H1 (cell line): ENCODE measurements at regions of chr14 and their contacts with region 1.

Region 1: DNA sequence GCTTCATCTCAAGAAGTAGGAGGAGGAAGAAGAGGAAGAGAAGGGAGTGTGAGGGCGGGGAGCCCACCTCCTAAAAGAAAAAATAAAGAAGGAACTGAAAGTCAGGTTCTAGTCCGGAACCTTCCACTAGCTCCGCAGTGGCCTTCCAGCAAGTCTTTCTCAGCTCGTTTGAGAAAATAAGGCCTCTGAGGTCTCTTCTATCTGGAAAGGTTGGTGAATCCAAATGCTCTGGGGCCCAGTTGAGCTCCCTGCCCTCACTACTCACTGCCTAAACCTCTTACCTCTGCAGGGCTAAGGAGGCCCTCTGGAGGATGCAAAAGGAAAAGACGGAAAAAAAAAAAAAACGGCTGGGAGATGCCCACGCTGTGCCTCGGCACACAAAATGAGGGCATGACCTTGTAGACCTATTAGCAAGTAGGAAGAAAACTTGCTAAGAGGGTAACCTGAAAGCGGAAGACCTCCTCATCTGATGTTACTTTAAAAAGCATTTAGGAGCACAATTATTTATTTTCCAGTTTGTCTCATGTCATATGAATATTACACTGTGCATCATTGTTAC is 35.9 kb downstream of the FBLN5 start:
- DNase-seq: peak in 1 of 2 experiments; percentile 46
- H3K4me3 ChIP-seq: no peak overlapping the region
- H3K27ac ChIP-seq: no peak overlapping the region
- H3K4me1 ChIP-seq: no peaks in the 10 kb centered on the region
- H3K27me3 ChIP-seq: no peaks in the 10 kb centered on the region
- CTCF ChIP-seq: peak; percentile 16 to 73 (median 51)
- EP300 ChIP-seq: no peak
- POLR2A ChIP-seq: no peak
- RAD21 ChIP-seq: peak; percentile 92 to 96

Region 2: DNA sequence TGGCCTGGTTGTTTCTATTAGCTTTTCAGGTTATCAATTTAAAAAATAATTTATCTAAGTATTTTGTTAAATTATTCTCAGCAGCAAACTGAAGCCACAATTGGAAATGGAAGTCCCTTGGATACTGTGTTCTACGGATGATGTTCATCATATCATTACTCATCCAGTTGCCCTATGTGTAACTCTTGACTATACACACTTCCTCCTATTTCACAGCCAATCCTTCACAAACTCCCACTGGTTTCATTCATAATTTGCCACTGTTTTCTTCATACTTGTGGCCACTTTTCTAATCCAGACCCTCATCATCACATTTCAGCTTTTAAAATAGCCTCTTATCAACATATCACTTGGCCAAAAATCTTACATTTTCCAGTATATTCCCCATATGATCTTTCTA is 263.7 kb before region 1 on chr14:
- CTCF ChIA-PET with region 1: interaction called, 14 read pairs
- POLR2A ChIA-PET with region 1: no interaction called
- DNase-seq: no peak
- H3K4me3 ChIP-seq: no peak overlapping the region
- H3K27ac ChIP-seq: no peak overlapping the region
- H3K4me1 ChIP-seq: no peaks in the 10 kb centered on the region
- H3K27me3 ChIP-seq: no peaks in the 10 kb centered on the region; a peak in 1 of 7 replicates
- CTCF ChIP-seq: no peak
- EP300 ChIP-seq: no peak
- POLR2A ChIP-seq: no peak
- RAD21 ChIP-seq: no peak

Region 3: DNA sequence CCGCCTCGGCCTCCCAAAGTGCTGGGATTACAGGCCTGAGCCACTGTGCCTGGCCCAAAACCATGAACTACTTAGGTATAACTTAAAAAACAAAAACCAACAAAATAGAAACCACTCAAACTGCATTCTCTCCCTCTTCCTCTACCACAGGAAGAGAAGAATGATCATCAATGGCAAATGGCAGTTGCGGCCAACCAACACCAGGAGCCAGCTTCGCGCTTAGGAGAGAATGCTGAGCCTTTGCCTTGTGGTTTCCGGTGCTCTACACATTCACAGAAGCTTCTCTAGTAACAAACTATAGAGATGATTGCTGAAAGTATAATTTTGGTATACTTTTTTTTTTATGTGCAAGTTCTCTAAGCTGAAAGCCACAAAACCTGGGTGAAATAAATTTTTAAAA is 196.7 kb before region 1 on chr14:
- CTCF ChIA-PET with region 1: interaction called, 15 read pairs
- POLR2A ChIA-PET with region 1: no interaction called
- DNase-seq: no peak
- H3K4me3 ChIP-seq: no peak overlapping the region
- H3K27ac ChIP-seq: no peak overlapping the region
- H3K4me1 ChIP-seq: no peaks in the 10 kb centered on the region
- H3K27me3 ChIP-seq: no peaks in the 10 kb centered on the region
- CTCF ChIP-seq: peak; percentile 55 to 68 (median 64)
- EP300 ChIP-seq: no peak
- POLR2A ChIP-seq: no peak
- RAD21 ChIP-seq: peak; percentile 81 to 86

Region 4: DNA sequence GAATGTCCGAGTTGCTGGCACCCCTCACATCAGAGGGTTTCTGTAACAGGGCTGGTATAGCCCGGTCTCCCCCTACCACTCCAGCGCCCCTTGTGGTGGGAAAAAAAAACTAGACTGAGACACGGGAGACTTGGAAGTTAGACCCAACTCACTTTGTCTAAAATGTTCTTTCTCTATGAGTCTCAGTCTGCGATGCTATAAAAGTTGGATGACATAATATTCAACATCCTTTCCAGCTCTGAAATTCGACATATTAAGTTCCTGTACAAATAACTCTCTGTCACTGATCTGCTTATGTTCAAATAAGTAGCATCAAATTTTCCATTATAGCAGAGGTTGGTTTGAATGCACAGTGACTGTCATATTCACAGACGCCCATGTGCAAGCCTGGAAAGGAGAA is 18.5 kb before region 1 on chr14:
- CTCF ChIA-PET with region 1: interaction called, 15 read pairs
- POLR2A ChIA-PET with region 1: no interaction called
- DNase-seq: peak in 1 of 2 experiments; percentile 82
- H3K4me3 ChIP-seq: no peak overlapping the region
- H3K27ac ChIP-seq: no peak overlapping the region
- H3K4me1 ChIP-seq: peaks cover 0 to 4% (median 1%) of the 10 kb centered on the region in 4 experiments; a peak in 3 of 7 replicates
- H3K27me3 ChIP-seq: no peaks in the 10 kb centered on the region
- CTCF ChIP-seq: peak; percentile 74 to 82 (median 76)
- EP300 ChIP-seq: no peak
- POLR2A ChIP-seq: no peak
- RAD21 ChIP-seq: peak; percentile 68 to 73

Region 5: DNA sequence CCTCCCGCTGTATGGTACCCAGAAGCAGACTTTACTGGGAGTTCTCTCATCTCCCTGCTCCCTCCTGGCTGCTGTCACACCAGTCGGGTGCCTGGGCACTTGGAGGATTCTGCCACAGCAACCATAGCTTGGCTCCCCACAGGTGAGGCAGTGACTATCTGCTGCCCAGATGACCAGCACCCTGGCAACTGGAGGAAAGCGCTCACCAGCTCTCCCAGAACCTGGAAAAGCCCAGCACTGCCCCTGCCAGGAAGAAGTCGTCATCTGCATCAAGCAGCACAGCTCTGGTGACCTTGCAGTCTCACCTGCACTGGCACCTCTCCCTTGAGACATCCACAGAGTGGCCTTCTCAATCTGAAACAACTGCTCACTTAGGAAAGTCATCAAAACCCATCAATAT is 12.3 kb before region 1 on chr14:
- CTCF ChIA-PET with region 1: interaction called, 15 read pairs
- POLR2A ChIA-PET with region 1: no interaction called
- DNase-seq: no peak
- H3K4me3 ChIP-seq: no peak overlapping the region
- H3K27ac ChIP-seq: no peak overlapping the region
- H3K4me1 ChIP-seq: peaks cover 0 to 4% (median 1%) of the 10 kb centered on the region in 4 experiments; a peak in 3 of 7 replicates
- H3K27me3 ChIP-seq: peaks cover 0 to 1% (median 0%) of the 10 kb centered on the region in 4 experiments; a peak in 1 of 7 replicates
- CTCF ChIP-seq: peak; percentile 10 to 41 (median 37); a peak in 2 of 4 replicates
- EP300 ChIP-seq: no peak
- POLR2A ChIP-seq: no peak
- RAD21 ChIP-seq: peak; percentile 48 to 60